B cell (primary cell): ENCODE measurements at regions of chr5 and their contacts with region 1.

Region 1: GRCh38 chr5:141878711-141879425 is 658 bp upstream of the PCDH1 start:
- DNase-seq: peak; percentile 94
- ATAC-seq: peak; percentile 84
- H3K4me3 ChIP-seq: peak overlapping the region in 4 of 5 experiments; percentile 34 to 65 (median 54)
- H3K4me3 Mint-ChIP-seq: peak overlapping the region; percentile 89
- H3K27ac ChIP-seq: no peak overlapping the region
- H3K27ac Mint-ChIP-seq: peak overlapping the region; percentile 46
- H3K4me1 ChIP-seq: peaks cover 39 to 43% of the 10 kb centered on the region in 2 donors
- H3K4me1 Mint-ChIP-seq: peaks cover 31% of the 10 kb centered on the region
- H3K27me3 ChIP-seq: peaks cover 0 to 88% (median 54%) of the 10 kb centered on the region in 4 experiments
- H3K27me3 Mint-ChIP-seq: peaks cover 72% of the 10 kb centered on the region
- CTCF ChIP-seq: peak; percentile 96

Region 2: DNA sequence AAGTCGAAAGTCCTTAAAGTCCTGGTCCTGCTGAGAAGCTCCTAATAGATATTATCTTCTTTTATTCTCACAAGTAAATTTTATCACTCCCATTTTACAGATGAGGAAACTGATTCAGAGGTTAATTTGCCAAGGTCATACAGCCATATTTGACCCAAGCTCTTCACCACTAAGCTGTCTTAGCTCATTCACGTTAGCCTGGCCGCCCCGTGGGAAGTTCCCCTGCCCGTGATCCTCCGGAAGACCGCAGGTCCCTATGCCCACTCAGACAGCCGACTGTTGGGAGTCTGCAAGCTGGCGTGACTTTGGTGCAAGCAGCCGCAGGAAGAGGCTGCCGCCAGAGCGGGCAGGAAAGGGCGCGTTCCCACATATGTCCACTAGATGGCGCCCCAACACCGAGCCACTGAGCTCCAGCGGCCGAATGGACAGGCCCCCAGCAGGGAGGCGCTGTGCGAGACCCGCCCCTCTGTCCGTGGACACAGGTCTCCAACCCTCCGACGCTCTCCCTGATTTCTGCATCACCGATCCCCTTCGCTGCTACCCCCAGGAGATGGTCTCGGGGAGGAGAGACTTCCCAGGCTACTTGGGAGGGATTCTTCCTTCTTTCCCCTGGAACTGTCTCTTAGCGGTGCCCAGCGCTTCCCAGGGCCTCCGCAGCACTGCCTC is 186.9 kb before region 1 on chr5:
- CTCF ChIA-PET with region 1: interaction called, 123 read pairs
- POLR2A ChIA-PET with region 1: interaction called, 3 read pairs
- intact Hi-C with region 1: loop called (anchors 1 kb)
- DNase-seq: peak; percentile 86
- ATAC-seq: peak; percentile 95
- H3K4me3 ChIP-seq: peak overlapping the region in 4 of 5 experiments; percentile 3 to 57 (median 33)
- H3K4me3 Mint-ChIP-seq: peak overlapping the region; percentile 44
- H3K27ac ChIP-seq: no peak overlapping the region
- H3K27ac Mint-ChIP-seq: no peak overlapping the region
- H3K4me1 ChIP-seq: peaks cover 8% of the 10 kb centered on the region in 2 donors
- H3K4me1 Mint-ChIP-seq: peaks cover 7% of the 10 kb centered on the region
- H3K27me3 ChIP-seq: peaks cover 0 to 47% (median 7%) of the 10 kb centered on the region in 4 experiments
- H3K27me3 Mint-ChIP-seq: peaks cover 68% of the 10 kb centered on the region
- CTCF ChIP-seq: peak; percentile 98

Region 3: DNA sequence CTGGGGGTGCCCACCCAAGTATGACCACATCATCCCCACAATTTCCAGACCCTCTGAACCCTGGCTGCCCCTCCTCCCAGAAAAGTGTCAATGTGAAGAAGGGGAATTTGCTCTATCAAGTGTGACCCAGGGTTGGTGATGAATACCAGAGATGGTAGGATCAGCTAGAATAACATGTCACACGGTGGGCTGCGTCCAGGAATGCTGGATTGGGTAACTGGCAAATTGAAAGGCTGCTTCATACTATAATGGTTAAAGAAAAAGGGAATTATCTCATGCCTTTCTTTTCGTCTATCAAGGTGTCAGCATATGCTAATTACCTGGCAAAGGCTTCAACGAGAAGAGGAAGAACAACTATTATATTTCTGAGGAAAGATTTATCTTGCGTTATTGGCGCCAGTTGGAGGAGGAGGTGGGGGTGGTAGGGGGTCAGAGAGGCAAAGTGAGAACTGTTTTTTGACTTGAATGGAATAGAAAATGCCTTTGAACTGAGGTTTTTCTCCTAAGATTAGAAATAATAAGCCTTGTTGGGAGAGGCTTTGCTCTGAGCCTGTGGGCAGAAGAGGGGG is 169.1 kb before region 1 on chr5:
- CTCF ChIA-PET with region 1: interaction called, 13 read pairs
- POLR2A ChIA-PET with region 1: no interaction called
- intact Hi-C with region 1: no loop called
- DNase-seq: no peak
- ATAC-seq: no peak
- H3K4me3 ChIP-seq: no peak overlapping the region
- H3K4me3 Mint-ChIP-seq: no peak overlapping the region
- H3K27ac ChIP-seq: no peak overlapping the region
- H3K27ac Mint-ChIP-seq: no peak overlapping the region
- H3K4me1 ChIP-seq: no peaks in the 10 kb centered on the region
- H3K4me1 Mint-ChIP-seq: no peaks in the 10 kb centered on the region
- H3K27me3 ChIP-seq: peaks cover 0 to 15% (median 1%) of the 10 kb centered on the region in 4 experiments
- H3K27me3 Mint-ChIP-seq: peaks cover 29% of the 10 kb centered on the region
- CTCF ChIP-seq: no peak

Region 4: DNA sequence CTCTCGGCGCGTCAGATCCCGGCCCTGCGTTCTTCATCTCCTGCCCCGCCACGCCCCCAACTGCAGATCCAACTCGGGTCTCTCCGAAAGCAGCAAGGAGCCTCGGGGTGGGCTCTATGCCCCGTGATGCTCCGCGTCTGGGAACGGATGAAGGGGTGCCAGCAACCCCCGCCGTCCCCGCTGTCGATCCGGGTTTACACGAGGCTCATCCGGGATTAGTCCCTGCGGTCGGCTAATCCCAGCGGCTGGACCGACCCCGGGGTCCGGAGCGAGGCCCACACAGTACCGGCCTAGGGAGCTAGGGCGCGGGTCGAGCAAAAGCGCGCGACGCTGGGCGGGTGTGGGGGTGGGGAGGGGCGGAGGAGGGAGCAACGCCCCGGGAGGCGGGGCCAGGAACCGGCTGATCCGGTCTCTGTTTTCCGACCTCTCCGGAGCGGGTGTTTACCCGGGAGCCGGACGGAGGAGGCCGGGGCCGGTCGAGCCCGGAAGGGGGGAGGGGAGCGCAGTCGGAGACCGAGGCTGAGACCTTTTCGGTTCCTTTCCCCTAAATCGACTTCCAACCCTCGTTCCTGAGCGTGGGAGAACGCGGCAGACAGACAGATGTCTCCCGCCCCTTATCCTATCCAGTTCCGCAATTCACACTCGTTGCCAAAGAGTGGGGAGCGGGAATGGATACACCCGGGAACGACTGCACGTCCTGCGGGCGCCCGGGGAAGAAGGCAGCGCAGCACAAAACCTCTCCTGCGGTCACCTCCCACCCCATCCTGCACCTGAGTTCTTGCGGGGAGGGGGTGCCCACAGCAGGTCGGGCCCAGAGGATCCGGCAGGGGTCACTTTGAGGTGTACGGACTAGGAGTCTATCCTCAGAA is 29.3 kb before region 1 on chr5:
- CTCF ChIA-PET with region 1: interaction called, 12 read pairs
- POLR2A ChIA-PET with region 1: no interaction called
- intact Hi-C with region 1: loop called (anchors 1 kb)
- DNase-seq: peak; percentile 79
- ATAC-seq: peak; percentile 83
- H3K4me3 ChIP-seq: peak overlapping the region; percentile 75 to 95 (median 78)
- H3K4me3 Mint-ChIP-seq: peak overlapping the region; percentile 91
- H3K27ac ChIP-seq: peak overlapping the region; percentile 55 to 70
- H3K27ac Mint-ChIP-seq: peak overlapping the region; percentile 88
- H3K4me1 ChIP-seq: peaks cover 9 to 12% of the 10 kb centered on the region in 2 donors
- H3K4me1 Mint-ChIP-seq: peaks cover 9% of the 10 kb centered on the region
- H3K27me3 ChIP-seq: peaks cover 0 to 4% (median 2%) of the 10 kb centered on the region in 4 experiments
- H3K27me3 Mint-ChIP-seq: peaks cover 16% of the 10 kb centered on the region
- CTCF ChIP-seq: no peak

Region 5: DNA sequence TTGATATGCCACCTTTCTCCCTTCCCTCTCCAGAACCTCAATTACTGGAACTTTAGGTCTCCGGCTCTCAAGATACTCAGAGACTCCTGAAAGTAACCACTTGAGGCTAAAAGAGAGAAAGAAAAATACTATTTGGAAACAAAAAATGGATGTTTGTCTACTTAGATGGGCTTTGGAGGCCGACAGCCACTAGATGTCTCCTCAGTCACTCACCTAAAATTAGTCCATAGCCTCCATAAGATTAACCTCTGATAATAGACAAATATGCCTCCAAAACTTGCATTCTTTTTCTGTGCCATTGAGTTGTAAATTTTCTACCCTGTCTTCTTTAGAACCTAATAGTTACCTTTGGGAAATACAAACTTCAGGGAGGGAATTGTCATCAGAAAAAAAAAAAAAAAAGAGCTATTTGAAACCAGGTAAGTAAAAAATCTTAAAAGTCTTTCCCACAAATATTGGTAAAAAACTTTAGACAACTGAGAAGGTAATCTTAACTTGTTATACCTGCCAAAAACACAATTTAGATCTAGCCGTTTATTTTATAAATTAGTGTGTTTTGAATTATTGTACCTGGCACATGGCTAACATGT is 10.5 kb after region 1 on chr5:
- CTCF ChIA-PET with region 1: interaction called, 49 read pairs
- POLR2A ChIA-PET with region 1: no interaction called
- intact Hi-C with region 1: no loop called
- DNase-seq: no peak
- ATAC-seq: no peak
- H3K4me3 ChIP-seq: no peak overlapping the region
- H3K4me3 Mint-ChIP-seq: no peak overlapping the region
- H3K27ac ChIP-seq: no peak overlapping the region
- H3K27ac Mint-ChIP-seq: no peak overlapping the region
- H3K4me1 ChIP-seq: peaks cover 0 to 4% of the 10 kb centered on the region in 2 donors
- H3K4me1 Mint-ChIP-seq: no peaks in the 10 kb centered on the region
- H3K27me3 ChIP-seq: peaks cover 0 to 11% (median 8%) of the 10 kb centered on the region in 4 experiments
- H3K27me3 Mint-ChIP-seq: peaks cover 34% of the 10 kb centered on the region
- CTCF ChIP-seq: no peak

Region 6: DNA sequence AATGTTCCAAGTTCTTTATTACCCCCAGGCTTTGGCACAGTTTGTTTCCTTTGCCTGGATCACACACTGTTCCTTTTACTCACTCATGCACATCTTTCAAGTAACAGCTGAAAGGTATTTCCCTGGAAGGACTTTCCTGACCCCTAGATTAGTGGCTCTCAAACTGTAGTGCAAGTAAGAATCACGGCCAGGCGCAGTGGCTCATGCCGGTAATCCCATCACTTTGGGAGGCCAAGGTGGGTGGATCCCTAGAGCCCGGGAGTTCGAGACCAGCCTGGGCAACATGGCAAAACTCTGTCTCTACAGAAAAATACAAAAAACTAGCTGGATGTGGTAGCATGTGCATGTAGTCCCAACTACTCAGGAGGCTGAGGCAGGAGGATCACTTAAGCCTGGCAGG is 25.7 kb after region 1 on chr5:
- CTCF ChIA-PET with region 1: interaction called, 14 read pairs
- POLR2A ChIA-PET with region 1: interaction called, 3 read pairs
- intact Hi-C with region 1: no loop called
- DNase-seq: no peak
- ATAC-seq: no peak
- H3K4me3 ChIP-seq: no peak overlapping the region
- H3K4me3 Mint-ChIP-seq: no peak overlapping the region
- H3K27ac ChIP-seq: no peak overlapping the region
- H3K27ac Mint-ChIP-seq: no peak overlapping the region
- H3K4me1 ChIP-seq: no peaks in the 10 kb centered on the region
- H3K4me1 Mint-ChIP-seq: no peaks in the 10 kb centered on the region
- H3K27me3 ChIP-seq: peaks cover 0 to 5% (median 0%) of the 10 kb centered on the region in 4 experiments
- H3K27me3 Mint-ChIP-seq: peaks cover 19% of the 10 kb centered on the region
- CTCF ChIP-seq: no peak

Region 7: DNA sequence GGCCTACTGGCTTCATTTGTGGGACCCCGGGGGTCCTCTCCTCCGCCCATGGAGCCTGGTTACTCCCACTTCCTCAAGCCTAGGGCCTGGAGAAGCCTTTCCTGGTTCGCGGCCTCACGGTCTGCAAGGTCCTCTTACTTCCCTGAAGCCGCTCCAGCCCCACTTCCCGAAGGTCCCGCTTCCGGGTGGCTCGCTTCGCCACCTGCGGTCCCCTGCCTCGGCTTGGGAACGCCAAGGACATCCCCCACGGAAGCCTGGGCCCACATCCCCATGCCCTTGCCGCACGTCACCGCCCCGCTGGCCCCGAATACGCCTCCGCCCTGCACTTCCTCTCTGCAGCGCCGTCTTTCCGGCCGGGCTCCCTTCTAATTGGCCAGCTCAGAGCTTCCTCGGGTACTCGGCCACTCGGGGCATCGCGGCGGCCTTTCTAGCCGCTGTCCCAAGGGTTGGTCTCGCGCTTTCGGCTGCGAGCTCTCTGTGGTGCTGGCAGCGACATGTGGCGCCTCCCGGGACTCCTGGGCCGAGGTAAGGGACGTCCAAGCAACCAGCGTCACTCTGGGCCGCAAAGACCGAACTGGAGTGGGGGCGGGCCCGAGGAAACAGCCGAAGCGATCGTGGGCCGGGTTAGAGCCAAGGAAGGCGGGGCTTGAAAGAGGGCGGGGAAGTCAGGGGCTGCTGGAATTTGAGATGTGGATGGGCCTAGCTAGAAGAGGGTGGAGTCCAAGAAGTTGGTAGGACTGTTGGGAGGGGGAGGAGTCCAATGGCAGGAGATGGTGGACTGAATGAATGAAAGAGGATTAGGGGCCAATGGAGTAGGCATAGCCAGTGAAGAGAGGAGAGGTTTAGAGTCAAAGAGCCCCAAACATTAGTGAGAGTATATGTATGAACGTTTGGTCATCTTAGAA is 44.8 kb after region 1 on chr5 and contains the start of gene DELE1:
- CTCF ChIA-PET with region 1: interaction called, 11 read pairs
- POLR2A ChIA-PET with region 1: interaction called, 3 read pairs
- intact Hi-C with region 1: loop called (anchors 5 kb)
- DNase-seq: peak; percentile 94
- ATAC-seq: peak; percentile 94
- H3K4me3 ChIP-seq: peak within 1 kb of the TSS; percentile 63 to 92 (median 85)
- H3K4me3 Mint-ChIP-seq: peak within 1 kb of the TSS; percentile 92
- H3K27ac ChIP-seq: peak within 1 kb of the TSS; percentile 95 to 98
- H3K27ac Mint-ChIP-seq: peak within 1 kb of the TSS; percentile 96
- H3K4me1 ChIP-seq: peaks cover 12 to 18% of the 10 kb centered on the region in 2 donors
- H3K4me1 Mint-ChIP-seq: peaks cover 20% of the 10 kb centered on the region
- H3K27me3 ChIP-seq: no peaks in the 10 kb centered on the region
- H3K27me3 Mint-ChIP-seq: no peaks in the 10 kb centered on the region
- CTCF ChIP-seq: no peak
- total RNA-seq, gene DELE1: 124 and 134 TPM in 2 replicates